ENCODE measurements at regions of chr15 and their contacts with region 1.

Region 1: DNA sequence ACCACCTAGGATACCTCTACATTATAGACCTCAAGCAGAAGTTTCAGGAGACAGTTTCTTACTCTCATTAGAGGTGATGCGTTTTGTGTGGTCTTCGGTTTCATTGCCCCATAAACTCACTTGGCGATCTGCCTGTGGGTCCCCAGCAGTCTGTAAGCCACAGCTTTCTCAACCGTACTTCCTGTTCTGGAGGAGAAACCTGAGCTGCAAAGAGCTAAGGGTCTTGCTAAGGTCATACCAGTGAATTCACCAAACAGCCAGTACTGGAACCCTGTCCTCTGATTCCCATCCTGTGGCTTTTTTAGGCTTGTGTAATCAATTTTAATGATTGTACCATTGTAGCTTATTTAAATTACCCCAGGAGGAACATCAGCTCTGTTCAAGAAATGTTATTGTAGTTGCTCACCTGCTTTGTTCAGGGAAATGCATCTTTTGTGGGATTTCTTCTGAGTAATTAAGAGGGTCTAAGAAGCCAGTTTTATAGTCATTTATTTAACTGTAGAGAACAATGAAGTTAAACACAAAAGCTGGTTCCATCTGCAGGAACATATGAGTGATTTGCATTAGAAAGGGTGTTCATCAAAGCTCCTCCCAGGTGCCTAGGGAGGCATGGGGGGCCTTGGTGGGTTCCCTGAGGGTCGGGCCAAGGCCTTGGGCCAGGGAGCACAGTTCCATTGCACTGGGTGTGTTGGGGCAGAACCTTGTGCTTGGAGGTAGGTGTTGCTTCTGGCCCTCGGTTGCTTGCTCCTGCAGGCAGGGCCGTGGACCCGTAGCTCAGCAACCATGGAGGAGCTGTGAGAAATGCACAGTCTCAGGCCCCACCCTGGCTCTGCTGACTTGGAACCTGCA is 69.6 kb downstream of the APBA2 start:
- DNase-seq: peak in 6 of 10 donors; percentile 18 to 58 (median 45)
- ATAC-seq: peak; percentile 78 to 80
- H3K4me3 Mint-ChIP-seq: peak overlapping the region; percentile 62 to 87 (median 82)
- H3K27ac Mint-ChIP-seq: peak overlapping the region; percentile 88 to 96 (median 93)
- H3K4me1 Mint-ChIP-seq: peaks cover 49 to 85% (median 83%) of the 10 kb centered on the region in 4 donors
- H3K27me3 Mint-ChIP-seq: peaks cover 0 to 1% (median 0%) of the 10 kb centered on the region in 5 donors

Region 2: DNA sequence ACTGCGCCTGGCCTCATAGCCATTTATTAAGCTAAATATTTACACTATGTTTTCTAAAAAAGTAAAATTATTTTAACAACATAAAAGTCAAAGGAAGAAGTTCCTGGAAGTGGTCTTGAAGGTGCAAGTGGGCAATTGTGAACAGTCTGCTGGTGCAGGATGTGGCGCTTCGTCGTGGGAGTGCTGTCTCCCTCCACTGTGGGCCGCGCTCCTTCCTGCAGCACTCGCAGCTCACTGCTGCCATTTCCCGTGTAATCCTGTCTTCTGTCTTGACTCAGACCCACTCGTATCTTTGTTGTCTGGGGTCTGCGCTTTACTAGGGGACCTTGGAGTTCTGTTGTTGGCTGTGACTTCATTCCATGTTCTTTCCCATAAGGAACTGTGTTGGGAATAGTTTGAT is 13.3 kb before region 1 on chr15:
- POLR2A ChIA-PET with region 1: interaction called, 18 read pairs
- DNase-seq: peak; percentile 28 to 75 (median 57)
- ATAC-seq: peak; percentile 77 to 82
- H3K4me3 Mint-ChIP-seq: peak overlapping the region; percentile 55 to 88 (median 73)
- H3K27ac Mint-ChIP-seq: peak overlapping the region; percentile 87 to 97 (median 96)
- H3K4me1 Mint-ChIP-seq: peaks cover 42 to 99% (median 96%) of the 10 kb centered on the region in 4 donors
- H3K27me3 Mint-ChIP-seq: no peaks in the 10 kb centered on the region

Measured in naive thymus-derived CD8-positive, alpha-beta T cell (primary cell).